CD14-positive monocyte (primary cell): ENCODE measurements at regions of chr6 and their contacts with region 1.

Region 1: GRCh38 chr6:46410334-46410953 is 80.8 kb downstream of the RCAN2 start:
- DNase-seq: peak; percentile 16 to 51 (median 42)
- H3K4me3 ChIP-seq: no peak overlapping the region
- H3K4me3 Mint-ChIP-seq: no peak overlapping the region
- H3K27ac ChIP-seq: no peak overlapping the region
- H3K27ac Mint-ChIP-seq: no peak overlapping the region
- H3K4me1 ChIP-seq: no peaks in the 10 kb centered on the region
- H3K4me1 Mint-ChIP-seq: no peaks in the 10 kb centered on the region
- H3K27me3 ChIP-seq: no peaks in the 10 kb centered on the region
- H3K27me3 Mint-ChIP-seq: peaks cover 0 to 1% (median 0%) of the 10 kb centered on the region in 3 donors
- CTCF ChIP-seq: peak; percentile 92

Region 2: GRCh38 chr6:45054610-45055009 is 1355.8 kb before region 1 on chr6:
- intact Hi-C with region 1: no loop called
- DNase-seq: no peak
- H3K4me3 ChIP-seq: no peak overlapping the region
- H3K4me3 Mint-ChIP-seq: no peak overlapping the region
- H3K27ac ChIP-seq: no peak overlapping the region
- H3K27ac Mint-ChIP-seq: no peak overlapping the region
- H3K4me1 ChIP-seq: peaks cover 0 to 2% of the 10 kb centered on the region in 2 donors
- H3K4me1 Mint-ChIP-seq: peaks cover 3% of the 10 kb centered on the region
- H3K27me3 ChIP-seq: no peaks in the 10 kb centered on the region
- H3K27me3 Mint-ChIP-seq: no peaks in the 10 kb centered on the region
- CTCF ChIP-seq: no peak

Region 3: GRCh38 chr6:45930420-45931040 is 479.9 kb before region 1 on chr6:
- intact Hi-C with region 1: loop called in 1 of 2 experiments (anchors 5 kb)
- DNase-seq: peak; percentile 29 to 50 (median 46)
- H3K4me3 ChIP-seq: no peak overlapping the region
- H3K4me3 Mint-ChIP-seq: no peak overlapping the region
- H3K27ac ChIP-seq: no peak overlapping the region
- H3K27ac Mint-ChIP-seq: no peak overlapping the region
- H3K4me1 ChIP-seq: no peaks in the 10 kb centered on the region
- H3K4me1 Mint-ChIP-seq: peaks cover 2% of the 10 kb centered on the region
- H3K27me3 ChIP-seq: no peaks in the 10 kb centered on the region
- H3K27me3 Mint-ChIP-seq: peaks cover 1 to 2% (median 2%) of the 10 kb centered on the region in 3 donors
- CTCF ChIP-seq: peak; percentile 97

Region 4: GRCh38 chr6:46090115-46091079 is 320.0 kb before region 1 on chr6:
- intact Hi-C with region 1: loop called (anchors 2 to 5 kb)
- DNase-seq: peak; percentile 10 to 41 (median 34)
- H3K4me3 ChIP-seq: no peak overlapping the region
- H3K4me3 Mint-ChIP-seq: no peak overlapping the region
- H3K27ac ChIP-seq: no peak overlapping the region
- H3K27ac Mint-ChIP-seq: no peak overlapping the region
- H3K4me1 ChIP-seq: no peaks in the 10 kb centered on the region
- H3K4me1 Mint-ChIP-seq: no peaks in the 10 kb centered on the region
- H3K27me3 ChIP-seq: peaks cover 0 to 2% of the 10 kb centered on the region in 2 donors
- H3K27me3 Mint-ChIP-seq: peaks cover 2 to 3% (median 3%) of the 10 kb centered on the region in 3 donors
- CTCF ChIP-seq: peak; percentile 82

Region 5: GRCh38 chr6:46465294-46466165 is 55.1 kb after region 1 on chr6:
- intact Hi-C with region 1: no loop called
- DNase-seq: no peak
- H3K4me3 ChIP-seq: no peak overlapping the region
- H3K4me3 Mint-ChIP-seq: no peak overlapping the region
- H3K27ac ChIP-seq: no peak overlapping the region
- H3K27ac Mint-ChIP-seq: peak overlapping the region in 1 of 7 donors; percentile 26
- H3K4me1 ChIP-seq: no peaks in the 10 kb centered on the region
- H3K4me1 Mint-ChIP-seq: no peaks in the 10 kb centered on the region
- H3K27me3 ChIP-seq: peaks cover 0 to 2% of the 10 kb centered on the region in 2 donors
- H3K27me3 Mint-ChIP-seq: peaks cover 0 to 3% (median 2%) of the 10 kb centered on the region in 3 donors
- CTCF ChIP-seq: no peak